ENCODE measurements at regions of chr3 and their contacts with region 1.

Region 1: DNA sequence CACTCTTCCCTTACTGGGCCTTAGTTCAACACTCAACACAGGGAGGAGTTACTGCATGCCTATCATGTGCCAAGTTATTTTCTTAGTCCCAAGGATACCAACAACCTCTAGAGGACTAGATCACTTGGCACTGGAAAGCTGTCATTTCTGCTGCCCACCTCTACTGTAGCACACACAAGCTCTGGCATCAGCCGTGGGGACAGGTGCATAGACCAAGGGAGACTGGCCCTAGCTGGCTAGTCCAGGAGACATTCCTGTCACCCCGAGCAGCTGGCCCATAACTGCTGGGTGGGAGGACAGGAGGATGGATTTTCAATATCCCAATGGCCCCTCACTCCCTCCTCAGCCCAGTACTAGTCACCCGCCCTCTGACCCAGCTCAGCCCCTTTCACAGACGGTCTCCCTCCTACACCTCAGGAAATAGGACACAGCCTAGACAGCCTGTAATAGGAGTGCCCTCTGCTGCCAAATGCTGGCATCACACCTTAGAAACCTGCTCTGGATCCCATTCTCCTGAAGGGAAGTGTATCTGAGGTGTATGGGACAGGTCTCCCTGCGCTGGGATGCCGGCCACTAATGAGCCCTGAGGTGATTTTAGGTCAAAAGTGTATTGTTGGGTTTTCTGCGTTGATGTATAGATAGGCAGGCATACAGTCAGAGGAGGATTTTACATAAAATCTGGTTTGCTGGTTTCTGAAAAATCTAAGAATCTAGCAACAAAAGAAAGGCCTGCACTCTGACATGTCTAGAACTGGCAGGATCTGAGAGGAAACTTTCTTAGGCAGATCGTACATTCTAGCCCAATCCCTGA is 3.4 kb upstream of the DZIP1L start:
- DNase-seq: peak; percentile 85
- H3K4me3 ChIP-seq: no peak overlapping the region
- H3K27ac ChIP-seq: no peak overlapping the region
- H3K4me1 ChIP-seq: peaks cover 3% of the 10 kb centered on the region
- H3K27me3 ChIP-seq: no peaks in the 10 kb centered on the region
- CTCF ChIP-seq: peak; percentile 30 to 72 (median 61)
- POLR2A ChIP-seq: no peak

Region 2: DNA sequence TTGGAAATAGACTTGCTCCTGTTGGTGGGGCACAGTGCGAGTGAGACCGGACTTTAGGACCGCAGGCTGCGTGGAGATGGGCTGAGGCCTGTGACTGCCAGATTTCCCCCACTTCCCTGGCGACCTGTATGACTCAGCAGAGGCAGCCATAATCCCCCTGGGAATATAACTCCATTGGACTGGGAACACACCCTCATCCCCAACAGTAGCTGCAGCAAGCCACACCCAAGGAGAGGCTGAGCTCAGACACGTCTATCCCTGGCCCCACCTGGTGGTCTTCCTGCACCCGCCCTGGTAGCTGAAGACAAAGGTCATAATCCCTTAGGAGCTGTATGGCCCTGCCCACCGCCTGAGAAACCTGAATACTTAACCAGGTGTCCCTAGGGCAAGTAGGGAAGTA is 46.0 kb before region 1 on chr3:
- intact Hi-C with region 1: loop called (anchors 5 kb)
- DNase-seq: no peak
- H3K4me3 ChIP-seq: no peak overlapping the region
- H3K27ac ChIP-seq: no peak overlapping the region
- H3K4me1 ChIP-seq: no peaks in the 10 kb centered on the region
- H3K27me3 ChIP-seq: no peaks in the 10 kb centered on the region
- CTCF ChIP-seq: no peak
- POLR2A ChIP-seq: no peak

Measured in testis (tissue), 5 donors.